AG04449 (cell line): ENCODE measurements at regions of chr17 and their contacts with region 1.

Region 1: GRCh38 chr17:27332485-27333409 is 38.8 kb downstream of the WSB1 start:
- DNase-seq: peak; percentile 65
- H3K4me3 ChIP-seq: peak overlapping the region; percentile 56
- CTCF ChIP-seq: peak; percentile 93

Region 2: DNA sequence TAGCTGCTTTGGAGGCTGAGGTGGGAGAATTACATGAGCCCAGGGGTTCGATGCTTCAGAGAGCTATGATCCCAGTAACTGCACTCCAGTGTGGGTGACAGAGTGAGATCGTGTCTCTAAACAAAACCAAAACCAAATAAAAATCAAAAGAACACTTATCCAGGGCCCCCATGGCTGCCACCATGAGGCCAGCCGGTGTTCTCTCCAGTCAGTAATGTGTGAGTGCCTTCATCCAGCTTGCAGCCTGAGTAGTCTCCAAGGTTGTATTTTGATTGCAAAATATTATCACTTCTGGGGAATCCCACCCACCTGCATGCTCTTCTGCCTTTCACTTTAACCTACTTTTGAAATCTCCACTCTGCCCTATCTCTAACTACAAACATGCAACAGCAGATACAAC is 259.9 kb before region 1 on chr17:
- CTCF ChIA-PET with region 1: no interaction called
- POLR2A ChIA-PET with region 1: no interaction called
- DNase-seq: no peak
- H3K4me3 ChIP-seq: no peak overlapping the region
- CTCF ChIP-seq: no peak

Region 3: DNA sequence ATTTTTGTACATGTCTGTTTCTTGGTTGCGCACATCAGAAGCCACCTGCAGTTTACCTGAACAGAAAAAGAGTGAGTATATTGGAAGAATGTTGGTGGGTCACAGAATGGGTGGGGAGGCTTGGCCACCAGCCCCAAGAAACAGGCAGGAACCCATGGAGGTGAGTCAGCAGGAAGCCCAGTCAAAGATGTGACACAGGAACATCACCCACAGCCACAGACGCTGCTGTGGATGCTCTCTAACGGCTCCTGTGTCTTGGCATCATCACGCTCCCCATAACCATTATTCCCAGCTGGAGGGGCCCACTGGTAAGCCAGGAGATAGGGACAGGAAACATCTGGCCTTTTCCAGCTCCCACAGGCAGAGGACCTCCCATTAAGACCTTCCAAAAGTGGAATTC is 132.8 kb before region 1 on chr17:
- CTCF ChIA-PET with region 1: interaction called, 14 read pairs
- POLR2A ChIA-PET with region 1: no interaction called
- DNase-seq: no peak
- H3K4me3 ChIP-seq: no peak overlapping the region
- CTCF ChIP-seq: no peak

Region 4: GRCh38 chr17:27293898-27294688 is 38.7 kb before region 1 on chr17 and contains the start of gene WSB1:
- CTCF ChIA-PET with region 1: interaction called, 4 read pairs
- POLR2A ChIA-PET with region 1: interaction called, 19 read pairs
- DNase-seq: peak; percentile 45
- H3K4me3 ChIP-seq: peak within 1 kb of the TSS; percentile 98
- CTCF ChIP-seq: no peak

Region 5: DNA sequence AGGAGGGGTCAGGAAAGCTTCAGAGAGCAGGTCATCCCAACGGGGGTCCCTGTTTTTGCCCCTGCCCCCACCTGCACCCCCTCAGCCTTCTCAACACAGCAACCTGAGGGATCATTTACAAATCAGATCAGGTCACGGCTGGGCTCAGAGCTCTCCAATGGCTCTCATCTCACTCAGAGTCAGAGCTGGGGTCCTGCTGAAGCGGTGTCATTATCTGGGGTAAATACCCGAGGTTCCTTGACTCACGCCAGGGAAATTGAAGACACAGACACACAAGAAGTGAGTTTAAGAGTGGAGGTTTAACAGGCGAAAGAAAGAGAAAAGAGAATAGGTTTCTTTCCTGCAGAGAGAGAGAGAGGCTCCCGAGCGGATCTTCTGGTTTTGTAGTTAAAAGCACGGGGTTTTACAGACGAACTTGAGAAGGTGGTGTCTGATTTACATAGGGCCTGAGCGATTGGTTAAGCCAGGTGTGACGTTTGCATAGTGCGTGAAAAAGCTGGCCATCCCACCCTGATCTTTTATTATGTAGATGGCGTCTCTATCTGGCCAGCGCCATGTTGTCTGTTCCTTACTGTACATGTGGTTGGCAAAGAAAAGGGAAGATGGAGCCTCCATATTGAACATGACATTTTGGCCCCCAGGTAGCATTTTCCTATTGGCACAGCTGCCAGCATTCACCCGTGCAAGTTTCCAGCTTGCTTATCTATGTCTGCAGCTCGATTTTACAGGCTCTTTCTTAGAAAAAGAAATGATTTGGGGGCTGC is 12.6 kb after region 1 on chr17:
- CTCF ChIA-PET with region 1: interaction called, 17 read pairs
- POLR2A ChIA-PET with region 1: interaction called, 3 read pairs
- DNase-seq: no peak
- H3K4me3 ChIP-seq: no peak overlapping the region
- CTCF ChIP-seq: no peak

Region 6: DNA sequence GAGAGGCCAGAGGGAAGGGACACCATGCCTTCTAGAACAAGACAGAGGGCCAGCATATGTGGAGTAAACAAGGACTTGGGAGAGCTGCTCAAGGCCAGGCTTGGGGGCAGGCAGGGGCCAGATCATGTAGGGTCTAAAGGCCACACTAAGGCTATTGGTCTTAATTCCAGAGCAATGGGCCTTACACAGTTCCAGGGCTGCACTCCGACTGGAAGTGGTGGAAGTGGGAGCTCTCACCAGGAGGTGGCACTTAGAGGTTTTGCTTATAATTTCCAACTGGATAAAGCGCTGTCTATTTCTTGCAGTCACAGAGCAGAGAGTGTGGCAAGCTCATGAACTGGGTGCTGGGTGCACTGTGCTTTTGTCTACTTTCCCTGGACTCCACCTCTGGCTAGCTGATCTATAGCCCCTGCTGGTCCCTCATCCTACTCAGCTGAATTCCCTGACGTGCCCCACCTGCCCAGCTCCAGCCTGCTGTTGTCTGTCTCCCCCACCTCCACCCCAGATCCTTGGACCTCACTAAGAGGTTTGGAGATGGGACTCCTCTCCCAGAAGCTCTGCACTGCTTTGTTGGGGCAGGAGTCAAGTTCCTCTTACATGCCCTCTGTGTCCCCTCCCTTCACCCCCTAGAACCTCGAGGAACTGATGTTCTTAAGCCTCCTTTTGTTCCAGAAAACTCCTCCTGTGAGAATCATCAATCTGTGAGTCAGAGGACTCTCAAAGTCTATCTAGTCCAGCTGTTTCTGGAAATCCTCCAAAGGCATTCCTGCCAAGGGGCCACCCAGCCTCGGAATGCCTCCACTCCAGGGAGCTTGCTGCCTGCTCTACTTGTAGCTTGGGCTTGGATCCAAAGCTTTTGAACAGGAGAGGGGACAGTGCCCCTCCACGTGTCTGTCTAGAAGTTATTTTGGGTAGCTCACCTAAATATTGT is 75.4 kb after region 1 on chr17:
- CTCF ChIA-PET with region 1: no interaction called
- POLR2A ChIA-PET with region 1: no interaction called
- DNase-seq: no peak
- H3K4me3 ChIP-seq: no peak overlapping the region
- CTCF ChIP-seq: no peak